ENCODE measurements at regions of chr2 and their contacts with region 1.

Region 1: DNA sequence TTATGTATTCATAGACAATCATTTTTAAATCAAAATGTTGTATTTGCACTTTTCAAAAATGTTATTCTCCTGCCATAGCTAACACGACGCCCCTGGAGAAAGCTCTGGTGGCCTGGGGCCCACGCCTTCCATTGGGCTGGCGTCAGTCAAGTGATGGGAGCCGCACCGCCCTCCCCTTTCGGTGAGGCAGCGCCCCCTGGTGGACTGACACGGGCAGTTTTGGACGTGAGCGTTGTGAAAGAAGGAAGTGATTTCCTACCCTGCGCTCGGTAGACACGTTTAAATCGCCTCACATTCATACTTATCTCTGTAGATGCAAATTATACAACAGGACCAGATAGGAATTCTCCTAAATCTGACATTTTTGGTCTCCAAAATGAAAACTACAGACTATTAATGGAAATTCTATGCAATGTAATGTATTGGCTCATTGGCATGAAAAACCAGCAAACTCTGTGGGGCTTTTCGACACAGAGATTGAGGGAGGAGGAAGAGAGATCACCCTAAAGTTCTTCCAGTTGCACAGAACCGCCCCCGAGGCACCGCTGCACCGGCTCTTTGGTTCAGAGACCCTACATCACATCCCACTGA is 326.2 kb upstream of the SOX11 start:
- DNase-seq: peak; percentile 41 to 80 (median 63)
- H3K4me3 ChIP-seq: no peak overlapping the region
- H3K27ac ChIP-seq: no peak overlapping the region
- H3K4me1 ChIP-seq: peaks cover 0 to 3% of the 10 kb centered on the region in 2 donors
- H3K27me3 ChIP-seq: no peaks in the 10 kb centered on the region
- CTCF ChIP-seq: peak; percentile 54 to 79 (median 72)
- POLR2A ChIP-seq: no peak

Region 2: GRCh38 chr2:3959372-3959771 is 1406.6 kb before region 1 on chr2:
- intact Hi-C with region 1: loop called in 1 of 2 experiments (anchors 5 kb)
- DNase-seq: peak in 1 of 7 donors; percentile 13
- H3K4me3 ChIP-seq: no peak overlapping the region
- H3K27ac ChIP-seq: no peak overlapping the region
- H3K4me1 ChIP-seq: no peaks in the 10 kb centered on the region
- H3K27me3 ChIP-seq: peaks cover 11% of the 10 kb centered on the region
- CTCF ChIP-seq: peak; percentile 27 to 79 (median 66)
- POLR2A ChIP-seq: no peak